ENCODE measurements at regions of chrX and their contacts with region 1.

Region 1: DNA sequence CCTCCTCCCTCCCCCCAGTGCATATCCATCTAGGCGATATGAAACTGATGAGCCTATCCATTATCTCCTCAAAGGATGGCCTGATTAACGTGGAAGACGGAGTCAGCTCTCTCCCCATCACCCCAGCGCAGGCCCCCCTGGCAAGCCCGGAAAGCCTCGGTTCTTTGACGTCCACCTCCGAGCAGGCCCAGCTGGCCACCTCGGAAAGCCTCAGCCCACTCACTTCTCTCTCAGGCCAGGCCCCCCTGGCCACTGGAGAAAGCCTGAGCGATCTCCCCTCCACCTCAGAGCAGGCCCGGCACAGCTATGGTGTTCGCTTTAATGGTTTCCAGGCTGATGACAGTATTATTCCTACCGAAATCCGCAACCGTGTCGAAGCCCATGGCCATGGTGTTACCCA is 14.8 kb downstream of the GABRQ start:
- DNase-seq: no peak
- H3K4me3 ChIP-seq: no peak overlapping the region
- H3K27ac ChIP-seq: no peak overlapping the region
- H3K4me1 ChIP-seq: no peaks in the 10 kb centered on the region
- H3K27me3 ChIP-seq: no peaks in the 10 kb centered on the region
- CTCF ChIP-seq: no peak
- EP300 ChIP-seq: no peak
- POLR2A ChIP-seq: no peak

Region 2: GRCh38 chrX:151543706-151544105 is 1108.8 kb before region 1 on chrX:
- in situ Hi-C with region 1: no loop called
- intact Hi-C with region 1: loop called (anchors 5 kb)
- DNase-seq: no peak
- H3K4me3 ChIP-seq: no peak overlapping the region
- H3K27ac ChIP-seq: no peak overlapping the region
- H3K4me1 ChIP-seq: no peaks in the 10 kb centered on the region
- H3K27me3 ChIP-seq: no peaks in the 10 kb centered on the region
- CTCF ChIP-seq: no peak
- EP300 ChIP-seq: no peak
- POLR2A ChIP-seq: no peak

Region 3: GRCh38 chrX:152154050-152154449 is 498.4 kb before region 1 on chrX:
- in situ Hi-C with region 1: no loop called
- intact Hi-C with region 1: no loop called
- DNase-seq: no peak
- H3K4me3 ChIP-seq: no peak overlapping the region
- H3K27ac ChIP-seq: no peak overlapping the region
- H3K4me1 ChIP-seq: no peaks in the 10 kb centered on the region
- H3K27me3 ChIP-seq: no peaks in the 10 kb centered on the region
- CTCF ChIP-seq: no peak
- EP300 ChIP-seq: no peak
- POLR2A ChIP-seq: no peak

Region 4: DNA sequence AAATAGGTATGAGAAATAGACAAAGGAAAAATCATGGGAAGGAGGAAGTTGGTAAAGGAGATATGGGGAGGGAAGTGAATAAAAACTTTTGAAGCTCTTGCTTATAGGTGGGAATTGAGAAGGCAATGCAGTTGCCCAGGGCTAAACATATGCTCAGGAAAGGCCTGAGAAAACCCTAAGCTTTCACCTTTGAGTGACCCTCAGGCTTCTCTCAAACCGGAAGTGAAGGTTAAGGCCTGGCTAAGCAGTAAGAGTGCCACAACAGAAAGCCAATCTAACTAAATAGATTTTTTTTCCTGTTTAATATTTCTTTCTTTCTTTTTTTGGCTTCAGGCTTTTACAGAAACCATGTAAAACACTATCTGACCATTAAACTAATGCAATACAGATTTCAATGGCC is 131.8 kb before region 1 on chrX:
- in situ Hi-C with region 1: no loop called
- intact Hi-C with region 1: no loop called
- DNase-seq: no peak
- H3K4me3 ChIP-seq: no peak overlapping the region
- H3K27ac ChIP-seq: no peak overlapping the region
- H3K4me1 ChIP-seq: no peaks in the 10 kb centered on the region
- H3K27me3 ChIP-seq: no peaks in the 10 kb centered on the region
- CTCF ChIP-seq: no peak
- EP300 ChIP-seq: no peak
- POLR2A ChIP-seq: no peak

Region 5: GRCh38 chrX:152588206-152588605 is 64.3 kb before region 1 on chrX:
- in situ Hi-C with region 1: no loop called
- intact Hi-C with region 1: no loop called
- DNase-seq: no peak
- H3K4me3 ChIP-seq: no peak overlapping the region
- H3K27ac ChIP-seq: no peak overlapping the region
- H3K4me1 ChIP-seq: no peaks in the 10 kb centered on the region
- H3K27me3 ChIP-seq: no peaks in the 10 kb centered on the region
- CTCF ChIP-seq: no peak
- EP300 ChIP-seq: no peak
- POLR2A ChIP-seq: no peak

Measured in transverse colon (tissue), 4 donors.